CD4-positive, alpha-beta T cell (primary cell): ENCODE measurements at regions of chr3 and their contacts with region 1.

Region 1: GRCh38 chr3:46488735-46489361 is 8.9 kb upstream of the RTP3 start:
- DNase-seq: peak; percentile 88 to 98 (median 94)
- ATAC-seq: peak; percentile 96
- H3K4me3 ChIP-seq: peak overlapping the region; percentile 46
- H3K4me3 Mint-ChIP-seq: peak overlapping the region; percentile 30
- H3K27ac ChIP-seq: no peak overlapping the region
- H3K27ac Mint-ChIP-seq: peak overlapping the region; percentile 62
- H3K4me1 ChIP-seq: peaks cover 15% of the 10 kb centered on the region
- H3K4me1 Mint-ChIP-seq: peaks cover 19% of the 10 kb centered on the region
- H3K27me3 ChIP-seq: no peaks in the 10 kb centered on the region
- H3K27me3 Mint-ChIP-seq: no peaks in the 10 kb centered on the region
- CTCF ChIP-seq: peak; percentile 100

Region 2: GRCh38 chr3:46266598-46266997 is 222.2 kb before region 1 on chr3:
- CTCF ChIA-PET with region 1: no interaction called
- POLR2A ChIA-PET with region 1: no interaction called
- intact Hi-C with region 1: no loop called
- DNase-seq: no peak
- ATAC-seq: no peak
- H3K4me3 ChIP-seq: no peak overlapping the region
- H3K4me3 Mint-ChIP-seq: no peak overlapping the region
- H3K27ac ChIP-seq: no peak overlapping the region
- H3K27ac Mint-ChIP-seq: no peak overlapping the region
- H3K4me1 ChIP-seq: peaks cover 25% of the 10 kb centered on the region
- H3K4me1 Mint-ChIP-seq: peaks cover 14% of the 10 kb centered on the region
- H3K27me3 ChIP-seq: no peaks in the 10 kb centered on the region
- H3K27me3 Mint-ChIP-seq: no peaks in the 10 kb centered on the region
- CTCF ChIP-seq: no peak

Region 3: DNA sequence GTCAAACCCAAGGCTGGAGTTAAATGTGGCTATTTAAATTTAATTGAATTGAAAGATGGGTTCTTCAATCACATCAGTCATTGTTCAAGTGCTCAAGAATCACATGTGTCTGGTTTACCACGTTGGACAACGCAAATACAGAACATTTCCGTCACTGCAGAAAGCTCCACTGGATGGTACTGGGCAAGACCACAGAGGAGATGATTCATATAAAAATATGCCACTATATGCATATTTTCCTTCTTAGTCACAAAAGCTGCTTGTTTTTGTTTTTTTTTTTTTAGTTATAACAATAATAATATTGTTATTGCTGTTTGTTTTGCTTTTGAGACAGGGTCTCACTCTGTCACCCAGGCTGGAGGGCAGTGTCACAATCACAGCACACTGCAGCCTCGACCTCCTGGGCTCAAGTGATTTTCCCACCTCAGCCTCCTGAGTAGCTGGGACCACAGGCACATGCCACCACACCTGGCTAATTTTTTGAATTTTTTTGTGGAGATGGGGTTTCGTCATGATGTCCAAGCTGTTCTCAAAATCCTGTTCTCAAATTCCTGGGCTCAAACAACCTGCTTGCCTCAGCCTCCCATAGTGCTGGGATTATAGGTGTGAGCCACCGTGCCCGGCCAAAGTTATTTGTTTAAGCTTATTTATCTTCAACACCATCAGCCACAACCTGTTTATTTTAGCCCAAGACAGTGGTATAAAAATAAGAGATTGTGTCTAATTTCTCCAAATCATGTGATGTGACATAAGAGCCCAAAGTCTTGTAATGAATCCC is 28.4 kb after region 1 on chr3:
- CTCF ChIA-PET with region 1: interaction called, 44 read pairs
- POLR2A ChIA-PET with region 1: interaction called, 3 read pairs
- intact Hi-C with region 1: no loop called
- DNase-seq: no peak
- ATAC-seq: no peak
- H3K4me3 ChIP-seq: no peak overlapping the region
- H3K4me3 Mint-ChIP-seq: no peak overlapping the region
- H3K27ac ChIP-seq: no peak overlapping the region
- H3K27ac Mint-ChIP-seq: no peak overlapping the region
- H3K4me1 ChIP-seq: no peaks in the 10 kb centered on the region
- H3K4me1 Mint-ChIP-seq: no peaks in the 10 kb centered on the region
- H3K27me3 ChIP-seq: no peaks in the 10 kb centered on the region
- H3K27me3 Mint-ChIP-seq: no peaks in the 10 kb centered on the region
- CTCF ChIP-seq: no peak

Region 4: DNA sequence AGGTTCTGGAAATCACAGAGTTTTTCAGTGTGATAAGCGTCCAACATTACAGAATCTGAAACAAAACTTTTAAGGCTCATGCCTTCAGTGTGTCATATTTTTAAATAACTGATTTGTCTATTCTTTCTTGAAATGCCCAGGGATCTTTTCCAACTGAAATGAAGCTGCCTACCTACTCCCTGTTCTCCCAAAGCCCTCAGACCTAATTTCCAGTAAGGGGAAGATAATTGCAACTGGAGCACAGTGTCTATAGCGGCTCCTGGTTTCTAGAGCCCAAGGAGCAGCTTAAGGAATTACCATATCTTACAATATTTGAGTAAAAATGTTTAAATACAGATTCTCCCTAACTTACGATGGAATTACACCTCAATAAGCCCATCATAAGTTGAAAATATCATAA is 44.2 kb after region 1 on chr3:
- CTCF ChIA-PET with region 1: interaction called, 145 read pairs
- POLR2A ChIA-PET with region 1: interaction called, 45 read pairs
- intact Hi-C with region 1: no loop called
- DNase-seq: no peak
- ATAC-seq: no peak
- H3K4me3 ChIP-seq: no peak overlapping the region
- H3K4me3 Mint-ChIP-seq: no peak overlapping the region
- H3K27ac ChIP-seq: no peak overlapping the region
- H3K27ac Mint-ChIP-seq: no peak overlapping the region
- H3K4me1 ChIP-seq: peaks cover 13% of the 10 kb centered on the region
- H3K4me1 Mint-ChIP-seq: peaks cover 32% of the 10 kb centered on the region
- H3K27me3 ChIP-seq: no peaks in the 10 kb centered on the region
- H3K27me3 Mint-ChIP-seq: no peaks in the 10 kb centered on the region
- CTCF ChIP-seq: no peak

Region 5: DNA sequence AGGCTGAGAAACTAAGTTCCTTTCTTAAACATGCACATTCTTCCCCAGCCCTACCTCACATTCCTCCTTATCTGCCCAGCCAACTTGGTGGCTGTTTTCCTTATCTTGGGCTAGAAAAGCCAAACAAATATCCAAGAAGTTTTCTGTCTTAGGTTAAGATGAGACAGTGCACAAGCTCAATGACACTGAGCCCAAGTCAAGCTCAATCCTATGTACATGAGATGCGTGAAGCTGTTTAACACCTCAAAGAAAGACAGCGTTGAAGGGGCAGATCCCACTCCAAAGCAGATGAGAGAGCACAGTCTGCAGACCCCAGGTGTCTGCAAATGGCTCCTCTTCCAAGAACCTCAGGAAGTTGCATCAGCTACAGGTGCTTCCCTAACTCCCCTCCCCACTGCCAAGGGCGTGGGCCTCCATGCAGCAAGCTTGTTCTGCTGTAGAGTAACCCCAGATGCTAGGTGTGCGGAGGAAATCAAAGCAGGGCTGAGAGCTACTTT is 60.6 kb after region 1 on chr3:
- CTCF ChIA-PET with region 1: interaction called, 53 read pairs
- POLR2A ChIA-PET with region 1: interaction called, 3 read pairs
- intact Hi-C with region 1: no loop called
- DNase-seq: no peak
- ATAC-seq: no peak
- H3K4me3 ChIP-seq: no peak overlapping the region
- H3K4me3 Mint-ChIP-seq: no peak overlapping the region
- H3K27ac ChIP-seq: no peak overlapping the region
- H3K27ac Mint-ChIP-seq: peak overlapping the region; percentile 54
- H3K4me1 ChIP-seq: peaks cover 12% of the 10 kb centered on the region
- H3K4me1 Mint-ChIP-seq: peaks cover 32% of the 10 kb centered on the region
- H3K27me3 ChIP-seq: no peaks in the 10 kb centered on the region
- H3K27me3 Mint-ChIP-seq: no peaks in the 10 kb centered on the region
- CTCF ChIP-seq: no peak

Region 6: GRCh38 chr3:46565607-46566035 is 76.8 kb after region 1 on chr3:
- CTCF ChIA-PET with region 1: interaction called, 243 read pairs
- POLR2A ChIA-PET with region 1: interaction called, 3 read pairs
- intact Hi-C with region 1: no loop called
- DNase-seq: no peak
- ATAC-seq: peak; percentile 35
- H3K4me3 ChIP-seq: peak overlapping the region; percentile 52
- H3K4me3 Mint-ChIP-seq: peak overlapping the region; percentile 88
- H3K27ac ChIP-seq: no peak overlapping the region
- H3K27ac Mint-ChIP-seq: peak overlapping the region; percentile 15
- H3K4me1 ChIP-seq: peaks cover 15% of the 10 kb centered on the region
- H3K4me1 Mint-ChIP-seq: peaks cover 15% of the 10 kb centered on the region
- H3K27me3 ChIP-seq: peaks cover 8 to 20% of the 10 kb centered on the region in 2 experiments
- H3K27me3 Mint-ChIP-seq: peaks cover 23% of the 10 kb centered on the region
- CTCF ChIP-seq: no peak

Region 7: GRCh38 chr3:46895204-46895660 is 406.4 kb after region 1 on chr3:
- CTCF ChIA-PET with region 1: no interaction called
- POLR2A ChIA-PET with region 1: no interaction called
- intact Hi-C with region 1: loop called in 1 of 2 experiments (anchors 5 kb)
- DNase-seq: peak; percentile 69 to 87 (median 76)
- ATAC-seq: peak; percentile 92
- H3K4me3 ChIP-seq: no peak overlapping the region
- H3K4me3 Mint-ChIP-seq: no peak overlapping the region
- H3K27ac ChIP-seq: no peak overlapping the region
- H3K27ac Mint-ChIP-seq: no peak overlapping the region
- H3K4me1 ChIP-seq: peaks cover 18% of the 10 kb centered on the region
- H3K4me1 Mint-ChIP-seq: no peaks in the 10 kb centered on the region
- H3K27me3 ChIP-seq: peaks cover 42 to 43% of the 10 kb centered on the region in 2 experiments
- H3K27me3 Mint-ChIP-seq: peaks cover 81% of the 10 kb centered on the region
- CTCF ChIP-seq: peak; percentile 82